Activated T-helper 1 cell treated with anti-CD3 and anti-CD28 coated beads, Interleukin-12 subunit alpha, Interleukin-12 subunit beta, Interleukin-2, Interleukin-4 antibody, amounts not matched to agents 30 ng/mL and 10 ng/mL and 1 ng/mL, durations not matched to agents 14 hours and 24 hours and 36 hours (primary cell): ENCODE measurements at regions of chr7 and their contacts with region 1.

Region 1: GRCh38 chr7:30564243-30564892 is 30.3 kb upstream of the GARS1 start:
- DNase-seq: peak; percentile 65
- H3K4me3 Mint-ChIP-seq: no peak overlapping the region
- H3K27ac Mint-ChIP-seq: peak overlapping the region; percentile 13
- H3K4me1 Mint-ChIP-seq: no peaks in the 10 kb centered on the region
- H3K27me3 Mint-ChIP-seq: no peaks in the 10 kb centered on the region

Region 2: DNA sequence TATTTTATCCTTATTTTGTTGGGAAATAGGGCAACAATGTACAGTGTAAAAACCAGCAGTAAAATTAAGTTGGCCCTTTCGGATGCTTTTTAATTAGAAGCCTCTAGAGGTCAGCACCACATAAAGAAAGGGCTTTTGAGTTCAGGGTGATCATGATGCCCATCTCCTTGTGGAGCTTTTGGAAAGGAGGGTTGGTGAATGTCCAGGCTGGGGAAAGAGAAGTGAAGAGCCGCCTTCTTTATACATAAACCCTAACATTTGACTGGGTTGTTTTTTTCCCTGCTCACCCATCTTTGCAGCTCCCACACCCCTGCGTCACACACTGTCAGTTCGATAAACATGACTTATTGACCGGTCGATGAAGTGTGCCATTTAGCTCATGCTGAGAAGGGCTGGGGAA is 399.8 kb before region 1 on chr7:
- intact Hi-C with region 1: loop called (anchors 1 kb)
- DNase-seq: no peak
- H3K4me3 Mint-ChIP-seq: no peak overlapping the region
- H3K27ac Mint-ChIP-seq: no peak overlapping the region
- H3K4me1 Mint-ChIP-seq: peaks cover 45% of the 10 kb centered on the region
- H3K27me3 Mint-ChIP-seq: peaks cover 3% of the 10 kb centered on the region

Region 3: GRCh38 chr7:30510124-30511075 is 54.0 kb before region 1 on chr7:
- intact Hi-C with region 1: loop called (anchors 1 kb)
- DNase-seq: no peak
- H3K4me3 Mint-ChIP-seq: no peak overlapping the region
- H3K27ac Mint-ChIP-seq: no peak overlapping the region
- H3K4me1 Mint-ChIP-seq: peaks cover 5% of the 10 kb centered on the region
- H3K27me3 Mint-ChIP-seq: no peaks in the 10 kb centered on the region

Region 4: GRCh38 chr7:30548762-30549344 is 15.5 kb before region 1 on chr7:
- intact Hi-C with region 1: loop called (anchors 1 kb)
- DNase-seq: no peak
- H3K4me3 Mint-ChIP-seq: no peak overlapping the region
- H3K27ac Mint-ChIP-seq: no peak overlapping the region
- H3K4me1 Mint-ChIP-seq: no peaks in the 10 kb centered on the region
- H3K27me3 Mint-ChIP-seq: no peaks in the 10 kb centered on the region

Region 5: DNA sequence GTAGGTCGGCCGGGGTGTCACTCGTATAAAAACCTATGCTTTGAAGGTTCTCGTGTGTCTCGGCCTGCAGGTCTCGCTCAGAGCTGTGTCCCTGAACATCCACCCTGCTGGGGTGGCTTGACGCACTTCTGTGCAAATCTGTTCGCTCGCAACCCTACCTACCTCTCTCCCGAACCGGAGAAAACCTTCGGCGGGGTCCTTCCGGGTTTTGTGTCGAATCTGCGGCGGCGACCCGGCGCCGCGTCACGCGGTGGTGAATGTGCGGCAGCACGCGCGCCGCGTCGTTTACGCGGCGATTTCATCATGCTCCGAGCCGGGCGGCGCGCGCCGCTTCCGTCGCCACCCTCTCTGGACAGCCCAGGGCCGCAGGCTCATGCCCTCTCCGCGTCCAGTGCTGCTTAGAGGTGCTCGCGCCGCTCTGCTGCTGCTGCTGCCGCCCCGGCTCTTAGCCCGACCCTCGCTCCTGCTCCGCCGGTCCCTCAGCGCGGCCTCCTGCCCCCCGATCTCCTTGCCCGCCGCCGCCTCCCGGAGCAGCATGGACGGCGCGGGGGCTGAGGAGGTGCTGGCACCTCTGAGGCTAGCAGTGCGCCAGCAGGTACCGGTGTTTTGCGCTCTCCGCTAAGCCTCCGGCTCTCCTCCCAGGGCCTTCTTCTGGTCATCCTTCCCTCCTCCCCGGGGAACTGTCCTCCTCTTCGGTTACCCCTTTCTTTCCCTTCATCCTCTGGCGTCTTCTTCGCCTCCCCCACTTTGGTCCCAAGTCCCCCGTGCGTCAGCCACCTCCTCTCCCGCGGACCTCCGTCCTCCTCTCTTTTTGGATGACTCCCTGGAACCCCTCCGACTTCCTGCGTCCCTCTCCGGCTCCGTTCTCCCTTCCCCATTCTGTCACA is 30.4 kb after region 1 on chr7 and contains the start of gene GARS1:
- intact Hi-C with region 1: no loop called
- DNase-seq: peak; percentile 88
- H3K4me3 Mint-ChIP-seq: peak within 1 kb of the TSS; percentile 99
- H3K27ac Mint-ChIP-seq: peak within 1 kb of the TSS; percentile 99
- H3K4me1 Mint-ChIP-seq: peaks cover 71% of the 10 kb centered on the region
- H3K27me3 Mint-ChIP-seq: no peaks in the 10 kb centered on the region
- total RNA-seq, gene GARS1: 234 and 250 TPM in 2 replicates